IMR-90 (cell line): ENCODE measurements at regions of chr4 and their contacts with region 1.

Region 1: DNA sequence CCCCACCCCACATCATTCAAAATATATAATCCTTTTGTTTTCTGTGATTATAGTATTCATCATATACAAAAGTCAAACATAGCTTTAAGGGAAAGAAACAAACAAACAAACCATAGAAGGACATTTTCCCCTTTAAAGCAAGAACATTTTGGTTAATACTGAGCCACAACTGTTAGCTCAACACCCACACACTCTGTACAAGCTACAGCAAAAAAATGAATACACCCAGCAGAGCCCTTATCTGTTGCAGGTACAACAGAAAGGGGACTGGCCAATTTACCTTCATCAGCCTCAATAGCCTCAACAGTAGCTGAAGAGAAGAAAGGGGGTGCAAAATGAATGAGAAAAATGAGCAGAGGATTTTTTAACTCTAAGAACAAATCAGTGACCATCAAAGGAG is 318.4 kb downstream of the PPP3CA start:
- DNase-seq: no peak
- ATAC-seq: no peak
- H3K4me3 ChIP-seq: no peak overlapping the region
- H3K27ac ChIP-seq: no peak overlapping the region
- H3K4me1 ChIP-seq: no peaks in the 10 kb centered on the region
- H3K27me3 ChIP-seq: no peaks in the 10 kb centered on the region
- CTCF ChIP-seq: no peak
- POLR2A ChIP-seq: no peak
- RAD21 ChIP-seq: no peak

Region 2: GRCh38 chr4:101066624-101067170 is 37.8 kb after region 1 on chr4:
- CTCF ChIA-PET with region 1: no interaction called
- POLR2A ChIA-PET with region 1: no interaction called
- dilution Hi-C with region 1: no loop called
- in situ Hi-C with region 1: no loop called
- intact Hi-C with region 1: no loop called
- DNase-seq: no peak
- ATAC-seq: no peak
- H3K4me3 ChIP-seq: no peak overlapping the region
- H3K27ac ChIP-seq: no peak overlapping the region
- H3K4me1 ChIP-seq: peaks cover 3% of the 10 kb centered on the region; the same call in 1 of the 2 replicates
- H3K27me3 ChIP-seq: no peaks in the 10 kb centered on the region
- CTCF ChIP-seq: no peak
- POLR2A ChIP-seq: no peak
- RAD21 ChIP-seq: no peak

Region 3: DNA sequence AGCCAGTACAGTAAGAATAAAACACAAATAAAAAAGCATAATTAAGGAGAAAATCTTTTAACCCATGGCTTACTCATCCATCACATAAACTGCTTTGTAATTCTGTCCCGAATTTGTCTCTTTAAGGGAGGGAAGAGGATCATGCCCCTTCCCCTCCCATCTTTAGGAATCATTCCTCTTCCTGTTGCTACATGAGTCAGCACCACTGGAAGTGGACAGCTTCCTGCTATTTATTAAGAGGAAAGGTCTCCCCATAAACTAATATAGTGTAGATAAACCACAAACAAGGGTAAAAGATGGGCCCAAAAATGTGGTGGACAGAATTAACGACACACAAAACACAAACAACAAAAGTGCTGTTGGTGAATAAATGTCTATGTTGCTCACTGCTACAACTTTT is 242.6 kb after region 1 on chr4:
- CTCF ChIA-PET with region 1: no interaction called
- POLR2A ChIA-PET with region 1: interaction called, 17 read pairs
- dilution Hi-C with region 1: no loop called
- in situ Hi-C with region 1: no loop called
- intact Hi-C with region 1: no loop called
- DNase-seq: peak; percentile 31
- ATAC-seq: no peak
- H3K4me3 ChIP-seq: no peak overlapping the region
- H3K27ac ChIP-seq: no peak overlapping the region
- H3K4me1 ChIP-seq: no peaks in the 10 kb centered on the region
- H3K27me3 ChIP-seq: no peaks in the 10 kb centered on the region
- CTCF ChIP-seq: no peak
- POLR2A ChIP-seq: no peak
- RAD21 ChIP-seq: no peak